Caco-2 (cell line): ENCODE measurements at regions of chr13 and their contacts with region 1.

Region 1: DNA sequence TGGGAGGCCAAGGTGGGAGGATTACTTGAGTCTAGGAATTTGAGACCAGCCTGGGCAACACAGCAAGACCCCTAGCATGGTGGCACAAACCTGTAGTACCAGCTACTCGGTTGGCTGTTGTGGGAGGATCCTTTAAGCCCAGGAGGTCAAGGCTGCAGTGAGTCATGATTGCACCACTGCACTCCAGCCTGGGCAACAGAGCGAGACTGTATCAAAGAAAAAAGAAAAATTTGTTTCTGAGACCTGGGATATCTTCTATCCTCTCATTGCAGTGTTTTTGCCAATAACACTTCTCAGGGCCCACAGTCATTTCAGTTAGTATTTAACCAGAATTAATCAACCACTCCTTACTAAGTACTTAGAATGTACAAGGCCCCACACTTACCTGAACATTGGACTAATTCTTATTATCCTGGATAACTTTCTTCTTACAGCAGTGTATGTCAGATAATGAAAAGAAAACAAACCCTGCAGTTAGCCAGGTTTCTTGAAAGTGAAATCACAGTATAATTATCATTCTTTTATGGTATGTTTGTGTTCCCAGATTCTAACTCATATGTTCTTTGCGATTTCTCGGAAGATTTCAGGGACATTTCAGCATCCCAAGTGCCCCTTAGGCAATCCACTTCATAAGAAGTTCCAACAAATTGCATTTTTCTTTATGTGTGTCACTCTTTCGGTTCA is 75.6 kb upstream of the KLF5 start:
- DNase-seq: peak; percentile 38 to 48
- H3K4me3 ChIP-seq: no peak overlapping the region
- H3K4me3 Mint-ChIP-seq: no peak overlapping the region
- H3K27ac Mint-ChIP-seq: peak overlapping the region; percentile 36
- H3K4me1 ChIP-seq: peaks cover 51% of the 10 kb centered on the region
- H3K4me1 Mint-ChIP-seq: no peaks in the 10 kb centered on the region
- H3K27me3 ChIP-seq: no peaks in the 10 kb centered on the region
- H3K27me3 Mint-ChIP-seq: no peaks in the 10 kb centered on the region
- CTCF ChIP-seq: no peak

Region 2: GRCh38 chr13:72963762-72964161 is 19.5 kb before region 1 on chr13:
- CTCF ChIA-PET with region 1: no interaction called
- POLR2A ChIA-PET with region 1: no interaction called
- intact Hi-C with region 1: loop called (anchors 2 kb)
- DNase-seq: no peak
- H3K4me3 ChIP-seq: no peak overlapping the region
- H3K4me3 Mint-ChIP-seq: no peak overlapping the region
- H3K27ac Mint-ChIP-seq: no peak overlapping the region
- H3K4me1 ChIP-seq: peaks cover 25% of the 10 kb centered on the region
- H3K4me1 Mint-ChIP-seq: peaks cover 13% of the 10 kb centered on the region
- H3K27me3 ChIP-seq: no peaks in the 10 kb centered on the region
- H3K27me3 Mint-ChIP-seq: no peaks in the 10 kb centered on the region
- CTCF ChIP-seq: no peak

Region 3: GRCh38 chr13:73000027-73000674 is 16.9 kb after region 1 on chr13:
- CTCF ChIA-PET with region 1: no interaction called
- POLR2A ChIA-PET with region 1: no interaction called
- intact Hi-C with region 1: loop called (anchors 1 kb)
- DNase-seq: no peak
- H3K4me3 ChIP-seq: no peak overlapping the region
- H3K4me3 Mint-ChIP-seq: no peak overlapping the region
- H3K27ac Mint-ChIP-seq: peak overlapping the region; percentile 8
- H3K4me1 ChIP-seq: peaks cover 30% of the 10 kb centered on the region
- H3K4me1 Mint-ChIP-seq: peaks cover 23% of the 10 kb centered on the region
- H3K27me3 ChIP-seq: no peaks in the 10 kb centered on the region
- H3K27me3 Mint-ChIP-seq: no peaks in the 10 kb centered on the region
- CTCF ChIP-seq: no peak

Region 4: GRCh38 chr13:73039181-73040108 is 56.2 kb after region 1 on chr13:
- CTCF ChIA-PET with region 1: no interaction called
- POLR2A ChIA-PET with region 1: no interaction called
- intact Hi-C with region 1: loop called (anchors 1 kb)
- DNase-seq: no peak
- H3K4me3 ChIP-seq: no peak overlapping the region
- H3K4me3 Mint-ChIP-seq: peak overlapping the region; percentile 38
- H3K27ac Mint-ChIP-seq: peak overlapping the region; percentile 45
- H3K4me1 ChIP-seq: peaks cover 57% of the 10 kb centered on the region
- H3K4me1 Mint-ChIP-seq: peaks cover 36% of the 10 kb centered on the region
- H3K27me3 ChIP-seq: no peaks in the 10 kb centered on the region
- H3K27me3 Mint-ChIP-seq: no peaks in the 10 kb centered on the region
- CTCF ChIP-seq: peak; percentile 4 to 18

Region 5: DNA sequence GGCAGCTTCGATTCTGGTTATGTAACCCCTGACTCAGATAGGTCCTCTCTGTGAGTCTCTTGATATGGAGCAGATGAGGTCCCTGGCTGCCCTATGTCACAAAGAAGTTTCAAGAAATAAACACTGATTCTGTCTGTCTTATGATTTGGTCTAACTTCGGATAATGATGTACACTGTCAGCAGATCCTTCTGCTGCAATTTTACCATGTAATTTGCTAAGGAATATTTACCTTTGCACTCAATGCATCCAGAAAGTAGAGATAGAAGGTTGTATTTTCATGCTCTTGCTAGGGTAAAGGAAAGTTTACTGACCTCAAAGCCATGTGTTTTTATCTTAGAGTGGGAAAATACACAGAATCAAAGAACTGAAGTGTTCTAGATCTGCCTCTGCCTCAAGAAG is 173.8 kb after region 1 on chr13:
- CTCF ChIA-PET with region 1: no interaction called
- POLR2A ChIA-PET with region 1: no interaction called
- intact Hi-C with region 1: no loop called
- DNase-seq: no peak
- H3K4me3 ChIP-seq: no peak overlapping the region
- H3K4me3 Mint-ChIP-seq: no peak overlapping the region
- H3K27ac Mint-ChIP-seq: no peak overlapping the region
- H3K4me1 ChIP-seq: no peaks in the 10 kb centered on the region
- H3K4me1 Mint-ChIP-seq: no peaks in the 10 kb centered on the region
- H3K27me3 ChIP-seq: no peaks in the 10 kb centered on the region
- H3K27me3 Mint-ChIP-seq: no peaks in the 10 kb centered on the region
- CTCF ChIP-seq: no peak